ENCODE measurements at regions of chr9 and their contacts with region 1.

Region 1: GRCh38 chr9:72022841-72023240 is 37.6 kb downstream of the C9orf57 start:
- DNase-seq: no peak
- H3K4me3 ChIP-seq: no peak overlapping the region
- H3K27ac ChIP-seq: no peak overlapping the region
- H3K4me1 ChIP-seq: peaks cover 0 to 2% (median 0%) of the 10 kb centered on the region in 4 experiments; a peak in 1 of 7 replicates
- H3K27me3 ChIP-seq: no peaks in the 10 kb centered on the region
- CTCF ChIP-seq: no peak
- EP300 ChIP-seq: no peak
- POLR2A ChIP-seq: no peak
- RAD21 ChIP-seq: no peak

Region 2: DNA sequence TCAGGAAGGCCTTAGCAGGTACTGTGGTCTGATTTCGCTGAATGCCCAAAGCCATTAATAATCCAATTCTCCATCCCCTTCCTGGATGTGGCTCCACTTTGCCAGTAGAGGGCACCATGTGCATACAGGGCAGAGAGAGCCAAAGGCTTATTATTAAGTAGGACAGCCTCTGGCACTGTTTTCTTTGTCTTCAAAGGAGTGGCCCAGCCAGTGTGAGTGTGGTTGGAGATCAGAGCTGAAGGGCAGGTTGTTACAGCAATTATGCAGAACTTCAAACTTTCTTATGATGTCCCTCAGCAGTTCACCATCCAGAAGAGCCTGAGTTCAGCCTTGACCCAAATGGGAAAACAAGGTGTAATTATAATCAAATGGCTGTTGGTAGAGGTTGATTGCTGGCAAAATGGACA is 215.9 kb before region 1 on chr9:
- CTCF ChIA-PET with region 1: interaction called, 67 read pairs
- POLR2A ChIA-PET with region 1: no interaction called
- DNase-seq: peak; percentile 27 to 55
- H3K4me3 ChIP-seq: no peak overlapping the region
- H3K27ac ChIP-seq: no peak overlapping the region
- H3K4me1 ChIP-seq: no peaks in the 10 kb centered on the region
- H3K27me3 ChIP-seq: no peaks in the 10 kb centered on the region
- CTCF ChIP-seq: peak; percentile 63 to 92 (median 90)
- EP300 ChIP-seq: no peak
- POLR2A ChIP-seq: no peak
- RAD21 ChIP-seq: peak; percentile 97 to 98

Region 3: DNA sequence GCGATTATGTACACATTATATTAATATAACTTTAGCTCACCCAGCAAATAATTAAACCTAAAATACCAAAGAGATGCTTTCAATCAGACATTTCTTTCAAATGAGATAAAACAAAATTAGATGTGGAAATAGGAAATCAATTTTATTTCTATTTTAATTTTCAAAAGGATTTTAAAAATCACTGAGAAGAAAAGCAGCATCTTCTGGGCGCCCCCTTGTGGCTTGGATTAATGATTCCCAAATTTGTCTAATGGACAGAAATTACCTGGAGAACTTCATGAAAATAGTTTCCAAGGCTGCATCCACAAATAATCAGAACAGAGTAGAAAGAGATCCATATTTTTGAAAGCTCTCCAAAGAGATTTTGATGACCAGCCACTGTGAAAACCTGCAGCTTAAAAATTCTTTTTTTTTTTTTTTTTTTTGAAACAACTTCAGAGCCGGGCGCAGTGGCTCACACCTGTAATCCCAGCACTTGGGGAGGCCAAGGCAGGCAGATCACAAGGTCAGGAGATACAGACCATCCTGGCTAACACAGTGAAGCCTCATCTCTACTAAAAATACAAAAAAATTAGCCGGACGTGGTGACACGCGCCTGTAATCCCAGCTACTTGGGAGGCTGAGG is 203.6 kb before region 1 on chr9:
- CTCF ChIA-PET with region 1: interaction called, 37 read pairs
- POLR2A ChIA-PET with region 1: no interaction called
- DNase-seq: no peak
- H3K4me3 ChIP-seq: no peak overlapping the region
- H3K27ac ChIP-seq: no peak overlapping the region
- H3K4me1 ChIP-seq: peaks cover 0 to 8% (median 1%) of the 10 kb centered on the region in 4 experiments; a peak in 3 of 7 replicates
- H3K27me3 ChIP-seq: no peaks in the 10 kb centered on the region
- CTCF ChIP-seq: peak in 2 of 3 experiments; percentile 27 to 46; a peak in 2 of 4 replicates
- EP300 ChIP-seq: no peak
- POLR2A ChIP-seq: no peak
- RAD21 ChIP-seq: peak; percentile 50 to 53

Region 4: GRCh38 chr9:72038890-72039410 is 16.1 kb after region 1 on chr9:
- CTCF ChIA-PET with region 1: interaction called, 31 read pairs
- POLR2A ChIA-PET with region 1: no interaction called
- DNase-seq: peak; percentile 77 to 92
- H3K4me3 ChIP-seq: no peak overlapping the region
- H3K27ac ChIP-seq: no peak overlapping the region
- H3K4me1 ChIP-seq: no peaks in the 10 kb centered on the region
- H3K27me3 ChIP-seq: no peaks in the 10 kb centered on the region
- CTCF ChIP-seq: peak; percentile 93 to 99 (median 95)
- EP300 ChIP-seq: no peak
- POLR2A ChIP-seq: no peak
- RAD21 ChIP-seq: peak; percentile 100

Region 5: GRCh38 chr9:72149231-72149975 is 126.6 kb after region 1 on chr9 and contains the start of gene GDA:
- CTCF ChIA-PET with region 1: no interaction called
- POLR2A ChIA-PET with region 1: no interaction called
- DNase-seq: peak; percentile 25 to 76
- H3K4me3 ChIP-seq: peak within 1 kb of the TSS; percentile 22 to 63 (median 47)
- H3K27ac ChIP-seq: no peak within 1 kb of the TSS
- H3K4me1 ChIP-seq: peaks cover 0 to 9% (median 2%) of the 10 kb centered on the region in 4 experiments; a peak in 4 of 7 replicates
- H3K27me3 ChIP-seq: peaks cover 14 to 31% (median 27%) of the 10 kb centered on the region in 4 experiments
- CTCF ChIP-seq: no peak
- EP300 ChIP-seq: no peak
- POLR2A ChIP-seq: no peak
- RAD21 ChIP-seq: peak in 1 of 2 experiments; percentile 11; a peak in 1 of 4 replicates
- total RNA-seq, gene GDA: 3.0 TPM in 2 replicates

Region 6: DNA sequence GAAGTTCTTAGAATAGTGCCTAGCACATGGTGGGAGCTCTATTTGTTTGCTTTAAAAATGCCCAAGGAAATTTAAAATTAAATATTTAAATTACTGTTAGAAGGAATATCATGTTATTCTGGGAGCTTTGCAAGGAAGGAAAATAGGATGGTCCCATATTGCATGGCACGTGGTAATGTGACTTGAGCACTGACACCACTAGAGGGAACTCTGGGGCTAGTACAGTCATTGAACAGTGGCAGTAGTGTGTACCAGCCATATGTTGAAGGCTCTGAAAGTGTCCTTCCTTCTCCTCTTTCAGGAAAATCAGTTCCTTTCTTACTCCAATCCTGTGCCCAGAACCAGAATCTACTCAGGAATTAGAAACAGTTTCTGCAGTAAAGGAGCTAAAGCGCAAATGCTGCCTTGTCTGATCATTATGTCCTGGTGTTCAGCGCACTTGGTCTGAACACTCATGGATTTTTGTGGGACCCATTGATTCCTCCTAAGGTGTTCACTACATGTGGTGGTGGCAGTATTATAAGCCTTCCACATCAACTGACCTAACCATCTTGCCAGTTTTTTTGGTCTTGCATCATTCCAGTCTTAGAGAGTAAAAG is 180.5 kb after region 1 on chr9:
- CTCF ChIA-PET with region 1: interaction called, 10 read pairs
- POLR2A ChIA-PET with region 1: no interaction called
- DNase-seq: no peak
- H3K4me3 ChIP-seq: no peak overlapping the region
- H3K27ac ChIP-seq: no peak overlapping the region
- H3K4me1 ChIP-seq: no peaks in the 10 kb centered on the region
- H3K27me3 ChIP-seq: no peaks in the 10 kb centered on the region
- CTCF ChIP-seq: peak; percentile 23 to 77 (median 62)
- EP300 ChIP-seq: no peak
- POLR2A ChIP-seq: no peak
- RAD21 ChIP-seq: peak; percentile 69 to 78

Region 7: DNA sequence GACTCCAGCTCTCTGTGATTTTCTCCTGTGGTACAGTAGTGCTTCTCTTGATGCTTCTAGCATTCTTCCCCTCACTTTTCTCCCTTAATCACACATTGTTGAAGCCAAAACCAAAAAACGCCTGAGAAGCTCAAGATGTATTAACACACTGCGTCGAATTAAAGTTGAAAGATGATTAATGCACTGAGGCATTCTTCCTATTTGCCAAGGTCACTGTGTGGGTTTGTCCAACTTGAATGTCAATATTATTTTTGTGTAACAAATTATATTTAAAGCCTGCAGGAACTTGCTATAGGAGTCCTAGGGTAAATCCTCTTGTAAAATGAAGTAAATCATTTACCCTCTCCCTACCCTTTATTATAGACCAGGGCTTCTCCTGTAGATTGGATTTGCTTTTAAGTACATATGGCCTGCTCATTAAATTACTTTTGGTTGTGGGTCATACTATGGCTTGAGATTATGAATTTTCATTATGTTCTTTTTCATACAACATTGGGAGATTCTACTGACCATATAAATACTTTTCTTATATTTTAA is 194.5 kb after region 1 on chr9:
- CTCF ChIA-PET with region 1: no interaction called
- POLR2A ChIA-PET with region 1: no interaction called
- DNase-seq: no peak
- H3K4me3 ChIP-seq: no peak overlapping the region
- H3K27ac ChIP-seq: no peak overlapping the region
- H3K4me1 ChIP-seq: no peaks in the 10 kb centered on the region
- H3K27me3 ChIP-seq: no peaks in the 10 kb centered on the region
- CTCF ChIP-seq: no peak
- EP300 ChIP-seq: no peak
- POLR2A ChIP-seq: no peak
- RAD21 ChIP-seq: no peak